Mammary epithelial cell (primary cell): ENCODE measurements at regions of chr6 and their contacts with region 1.

Region 1: GRCh38 chr6:161613711-161614110 is 339.9 kb upstream of the AGPAT4 start:
- DNase-seq: no peak
- H3K4me3 ChIP-seq: no peak overlapping the region
- H3K27ac ChIP-seq: no peak overlapping the region
- H3K4me1 ChIP-seq: no peaks in the 10 kb centered on the region
- H3K27me3 ChIP-seq: no peaks in the 10 kb centered on the region
- CTCF ChIP-seq: no peak

Region 2: DNA sequence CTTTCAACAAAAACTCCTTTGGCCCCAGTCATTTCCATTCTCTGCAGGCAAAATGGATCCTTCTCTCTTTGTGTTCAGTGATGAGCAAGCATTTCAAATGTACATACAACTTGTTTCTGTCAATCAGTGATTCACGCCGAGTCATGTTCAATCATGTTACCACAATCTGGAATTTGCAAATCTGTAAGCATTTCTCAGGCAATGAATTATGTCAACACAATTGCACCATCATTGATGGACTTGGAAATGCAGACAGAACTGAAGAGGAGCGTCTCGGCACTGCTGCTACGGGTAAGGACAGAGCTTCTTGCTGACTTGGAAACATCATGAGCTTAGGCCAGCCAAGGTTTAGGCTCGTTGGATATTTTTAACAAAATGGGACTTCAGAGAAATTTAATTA is 207.1 kb before region 1 on chr6:
- CTCF ChIA-PET with region 1: no interaction called
- dilution Hi-C with region 1: no loop called
- in situ Hi-C with region 1: no loop called
- intact Hi-C with region 1: no loop called
- DNase-seq: peak; percentile 95
- H3K4me3 ChIP-seq: no peak overlapping the region
- H3K27ac ChIP-seq: peak overlapping the region; percentile 77
- H3K4me1 ChIP-seq: peaks cover 17% of the 10 kb centered on the region
- H3K27me3 ChIP-seq: no peaks in the 10 kb centered on the region
- CTCF ChIP-seq: no peak

Region 3: GRCh38 chr6:161575523-161576254 is 38.0 kb before region 1 on chr6:
- CTCF ChIA-PET with region 1: no interaction called
- dilution Hi-C with region 1: loop called (anchors 5 kb)
- in situ Hi-C with region 1: no loop called
- intact Hi-C with region 1: no loop called
- DNase-seq: no peak
- H3K4me3 ChIP-seq: no peak overlapping the region
- H3K27ac ChIP-seq: no peak overlapping the region
- H3K4me1 ChIP-seq: no peaks in the 10 kb centered on the region
- H3K27me3 ChIP-seq: no peaks in the 10 kb centered on the region
- CTCF ChIP-seq: no peak

Region 4: GRCh38 chr6:161649068-161649467 is 35.4 kb after region 1 on chr6:
- CTCF ChIA-PET with region 1: no interaction called
- dilution Hi-C with region 1: loop called (anchors 5 kb)
- in situ Hi-C with region 1: no loop called
- intact Hi-C with region 1: no loop called
- DNase-seq: no peak
- H3K4me3 ChIP-seq: no peak overlapping the region
- H3K27ac ChIP-seq: no peak overlapping the region
- H3K4me1 ChIP-seq: no peaks in the 10 kb centered on the region
- H3K27me3 ChIP-seq: no peaks in the 10 kb centered on the region
- CTCF ChIP-seq: no peak

Region 5: DNA sequence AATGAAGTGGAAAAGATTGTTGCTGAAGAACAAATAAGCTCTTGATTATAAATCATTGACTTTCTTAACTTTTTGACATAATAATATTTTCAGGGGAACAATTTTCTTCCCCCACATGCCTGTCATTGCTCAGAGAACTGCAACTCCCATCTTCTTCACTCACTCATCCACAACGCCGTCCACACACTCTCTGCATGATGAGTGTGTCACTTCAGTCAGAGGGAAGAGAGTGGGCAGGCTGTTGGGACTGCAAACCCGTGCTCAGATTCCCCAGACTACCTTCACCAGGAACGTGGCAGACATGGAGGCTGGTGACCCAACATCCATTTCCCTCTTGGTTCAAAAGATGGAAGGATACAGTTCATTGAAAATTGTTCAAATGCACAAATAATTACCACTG is 463.1 kb after region 1 on chr6:
- CTCF ChIA-PET with region 1: no interaction called
- dilution Hi-C with region 1: no loop called
- in situ Hi-C with region 1: no loop called
- intact Hi-C with region 1: no loop called
- DNase-seq: no peak
- H3K4me3 ChIP-seq: no peak overlapping the region
- H3K27ac ChIP-seq: no peak overlapping the region
- H3K4me1 ChIP-seq: peaks cover 11% of the 10 kb centered on the region
- H3K27me3 ChIP-seq: no peaks in the 10 kb centered on the region
- CTCF ChIP-seq: no peak